Activated T-helper 2 cell treated with anti-CD3 and anti-CD28 coated beads, Interferon-gamma antibody, Interleukin-2, Interleukin-4, amounts not matched to agents 10 μg/mL and 5 μg/mL and 100 μg/mL, durations not matched to agents 14 hours and 24 hours and 36 hours (primary cell): ENCODE measurements at regions of chr21 and their contacts with region 1.

Region 1: GRCh38 chr21:25487046-25487594 is 120.2 kb downstream of the MRPL39 start:
- DNase-seq: no peak
- H3K4me3 Mint-ChIP-seq: peak overlapping the region; percentile 35
- H3K27ac Mint-ChIP-seq: peak overlapping the region; percentile 83
- H3K4me1 Mint-ChIP-seq: peaks cover 61% of the 10 kb centered on the region
- H3K27me3 Mint-ChIP-seq: no peaks in the 10 kb centered on the region

Region 2: DNA sequence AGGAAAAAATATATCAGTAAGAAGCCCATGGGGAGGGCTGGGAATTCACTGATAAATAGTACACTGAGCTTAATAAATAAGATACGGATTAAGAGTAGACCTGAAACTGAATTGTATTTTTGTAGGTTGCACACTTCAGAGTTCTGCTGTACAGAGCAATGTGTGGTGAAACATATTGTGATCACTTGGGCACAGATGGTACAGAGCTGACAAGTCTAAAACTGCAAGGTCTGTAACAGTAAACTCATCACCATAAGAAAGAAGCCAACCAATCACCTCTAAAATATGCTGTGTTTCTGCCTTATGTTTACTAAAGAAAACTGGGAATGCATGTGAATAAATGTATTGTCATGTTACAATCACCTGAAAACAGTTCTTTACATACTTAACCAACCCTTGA is 240.6 kb before region 1 on chr21:
- intact Hi-C with region 1: no loop called
- DNase-seq: no peak
- H3K4me3 Mint-ChIP-seq: no peak overlapping the region
- H3K27ac Mint-ChIP-seq: no peak overlapping the region
- H3K4me1 Mint-ChIP-seq: no peaks in the 10 kb centered on the region
- H3K27me3 Mint-ChIP-seq: no peaks in the 10 kb centered on the region

Region 3: DNA sequence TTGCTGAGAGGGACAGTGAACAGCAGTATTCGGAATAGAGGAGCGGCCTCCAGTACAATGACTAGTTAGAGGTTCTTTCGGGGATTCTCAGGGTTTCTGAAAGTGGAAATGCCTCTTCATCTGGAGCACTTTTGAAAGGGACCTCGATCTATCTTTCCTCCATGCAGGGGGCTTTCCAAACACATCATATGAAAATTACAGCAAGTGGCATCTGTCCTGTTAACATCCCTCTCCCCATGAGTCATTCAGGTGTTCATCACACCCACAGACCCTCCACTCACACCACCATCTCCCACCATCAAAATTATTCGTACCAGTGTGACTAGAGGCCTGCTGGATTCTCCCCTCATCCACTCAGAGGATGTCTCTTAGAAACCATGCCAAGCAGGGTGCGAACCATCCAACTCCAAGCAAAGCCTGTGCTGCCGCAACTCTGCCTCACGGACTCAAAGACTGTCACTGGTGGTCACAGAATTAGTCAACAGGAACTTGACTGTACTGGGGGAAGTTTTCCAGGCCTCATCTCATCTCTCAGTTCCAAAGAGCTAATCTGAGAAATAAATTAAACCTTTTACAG is 90.9 kb before region 1 on chr21:
- intact Hi-C with region 1: loop called (anchors 1 kb)
- DNase-seq: peak; percentile 48
- H3K4me3 Mint-ChIP-seq: peak overlapping the region; percentile 2
- H3K27ac Mint-ChIP-seq: peak overlapping the region; percentile 88
- H3K4me1 Mint-ChIP-seq: peaks cover 17% of the 10 kb centered on the region
- H3K27me3 Mint-ChIP-seq: no peaks in the 10 kb centered on the region

Region 4: GRCh38 chr21:25457411-25457810 is 29.7 kb before region 1 on chr21:
- intact Hi-C with region 1: loop called (anchors 1 kb)
- DNase-seq: no peak
- H3K4me3 Mint-ChIP-seq: peak overlapping the region; percentile 58
- H3K27ac Mint-ChIP-seq: peak overlapping the region; percentile 84
- H3K4me1 Mint-ChIP-seq: peaks cover 50% of the 10 kb centered on the region
- H3K27me3 Mint-ChIP-seq: no peaks in the 10 kb centered on the region

Region 5: DNA sequence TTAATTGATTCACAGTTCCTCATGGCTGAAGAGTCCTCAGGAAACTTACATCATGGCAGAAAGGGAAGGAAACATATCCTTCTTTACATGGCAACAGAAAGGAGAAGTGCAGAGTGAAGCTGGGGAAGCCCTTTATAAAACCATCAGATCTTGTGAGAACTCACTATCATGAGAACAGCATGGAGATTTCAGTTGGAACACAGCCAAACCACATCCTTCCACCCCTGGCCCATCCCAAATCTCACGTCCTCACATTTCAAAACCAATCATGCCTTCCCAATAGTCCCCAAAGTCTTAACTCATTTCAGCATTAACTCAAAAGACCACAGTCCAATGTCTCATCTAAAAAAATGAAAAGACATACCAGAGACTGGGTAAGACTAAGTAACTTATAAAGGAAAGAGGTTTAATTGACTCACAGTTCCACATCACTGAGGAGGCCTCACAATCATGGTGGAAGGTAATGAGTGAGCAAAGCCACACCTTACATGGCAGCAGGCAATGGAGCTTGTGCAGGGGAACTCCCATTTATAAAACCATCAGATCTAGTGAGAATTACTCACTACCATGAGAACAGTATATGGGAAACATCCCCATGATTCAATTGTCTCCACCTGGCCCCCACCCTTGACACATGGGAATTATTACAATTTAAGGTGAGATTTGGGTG is 15.0 kb after region 1 on chr21:
- intact Hi-C with region 1: loop called (anchors 1 kb)
- DNase-seq: no peak
- H3K4me3 Mint-ChIP-seq: no peak overlapping the region
- H3K27ac Mint-ChIP-seq: peak overlapping the region; percentile 92
- H3K4me1 Mint-ChIP-seq: peaks cover 40% of the 10 kb centered on the region
- H3K27me3 Mint-ChIP-seq: no peaks in the 10 kb centered on the region

Region 6: DNA sequence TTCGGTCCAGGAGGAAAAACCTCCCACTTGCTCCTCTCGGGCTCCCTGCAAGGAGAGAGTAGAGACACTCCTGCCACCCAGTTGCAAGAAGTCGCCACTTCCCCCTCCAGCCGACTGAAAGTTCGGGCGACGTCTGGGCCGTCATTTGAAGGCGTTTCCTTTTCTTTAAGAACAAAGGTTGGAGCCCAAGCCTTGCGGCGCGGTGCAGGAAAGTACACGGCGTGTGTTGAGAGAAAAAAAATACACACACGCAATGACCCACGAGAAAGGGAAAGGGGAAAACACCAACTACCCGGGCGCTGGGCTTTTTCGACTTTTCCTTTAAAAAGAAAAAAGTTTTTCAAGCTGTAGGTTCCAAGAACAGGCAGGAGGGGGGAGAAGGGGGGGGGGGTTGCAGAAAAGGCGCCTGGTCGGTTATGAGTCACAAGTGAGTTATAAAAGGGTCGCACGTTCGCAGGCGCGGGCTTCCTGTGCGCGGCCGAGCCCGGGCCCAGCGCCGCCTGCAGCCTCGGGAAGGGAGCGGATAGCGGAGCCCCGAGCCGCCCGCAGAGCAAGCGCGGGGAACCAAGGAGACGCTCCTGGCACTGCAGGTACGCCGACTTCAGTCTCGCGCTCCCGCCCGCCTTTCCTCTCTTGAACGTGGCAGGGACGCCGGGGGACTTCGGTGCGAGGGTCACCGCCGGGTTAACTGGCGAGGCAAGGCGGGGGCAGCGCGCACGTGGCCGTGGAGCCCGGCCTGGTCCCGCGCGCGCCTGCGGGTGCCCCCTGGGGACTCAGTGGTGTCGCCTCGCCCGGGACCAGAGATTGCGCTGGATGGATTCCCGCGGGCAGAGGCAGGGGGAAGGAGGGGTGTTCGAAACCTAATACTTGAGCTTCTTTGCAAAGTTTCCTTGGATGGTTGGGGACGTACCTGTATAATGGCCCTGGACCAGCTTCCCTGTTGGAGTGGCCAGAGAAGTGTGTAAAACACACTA is 74.8 kb after region 1 on chr21:
- intact Hi-C with region 1: loop called (anchors 1 kb)
- DNase-seq: peak; percentile 68
- H3K4me3 Mint-ChIP-seq: peak overlapping the region; percentile 91
- H3K27ac Mint-ChIP-seq: peak overlapping the region; percentile 99
- H3K4me1 Mint-ChIP-seq: peaks cover 54% of the 10 kb centered on the region
- H3K27me3 Mint-ChIP-seq: no peaks in the 10 kb centered on the region

Region 7: GRCh38 chr21:25584833-25585676 is 97.9 kb after region 1 on chr21:
- intact Hi-C with region 1: no loop called
- DNase-seq: no peak
- H3K4me3 Mint-ChIP-seq: no peak overlapping the region
- H3K27ac Mint-ChIP-seq: no peak overlapping the region
- H3K4me1 Mint-ChIP-seq: peaks cover 38% of the 10 kb centered on the region
- H3K27me3 Mint-ChIP-seq: no peaks in the 10 kb centered on the region